Activated naive CD4-positive, alpha-beta T cell treated with anti-CD3 and anti-CD28 coated beads, Interleukin-2, amount 10 ng/mL, durations not matched to agents 7 days and 5 days (primary cell): ENCODE measurements at regions of chr7 and their contacts with region 1.

Region 1: GRCh38 chr7:149125863-149126661 is at the start of gene ZNF425:
- DNase-seq: peak; percentile 94
- H3K4me3 Mint-ChIP-seq: peak within 1 kb of the TSS; percentile 99
- H3K27ac Mint-ChIP-seq: peak within 1 kb of the TSS; percentile 99
- H3K4me1 Mint-ChIP-seq: peaks cover 28% of the 10 kb centered on the region
- H3K27me3 Mint-ChIP-seq: peaks cover 9% of the 10 kb centered on the region

Region 2: DNA sequence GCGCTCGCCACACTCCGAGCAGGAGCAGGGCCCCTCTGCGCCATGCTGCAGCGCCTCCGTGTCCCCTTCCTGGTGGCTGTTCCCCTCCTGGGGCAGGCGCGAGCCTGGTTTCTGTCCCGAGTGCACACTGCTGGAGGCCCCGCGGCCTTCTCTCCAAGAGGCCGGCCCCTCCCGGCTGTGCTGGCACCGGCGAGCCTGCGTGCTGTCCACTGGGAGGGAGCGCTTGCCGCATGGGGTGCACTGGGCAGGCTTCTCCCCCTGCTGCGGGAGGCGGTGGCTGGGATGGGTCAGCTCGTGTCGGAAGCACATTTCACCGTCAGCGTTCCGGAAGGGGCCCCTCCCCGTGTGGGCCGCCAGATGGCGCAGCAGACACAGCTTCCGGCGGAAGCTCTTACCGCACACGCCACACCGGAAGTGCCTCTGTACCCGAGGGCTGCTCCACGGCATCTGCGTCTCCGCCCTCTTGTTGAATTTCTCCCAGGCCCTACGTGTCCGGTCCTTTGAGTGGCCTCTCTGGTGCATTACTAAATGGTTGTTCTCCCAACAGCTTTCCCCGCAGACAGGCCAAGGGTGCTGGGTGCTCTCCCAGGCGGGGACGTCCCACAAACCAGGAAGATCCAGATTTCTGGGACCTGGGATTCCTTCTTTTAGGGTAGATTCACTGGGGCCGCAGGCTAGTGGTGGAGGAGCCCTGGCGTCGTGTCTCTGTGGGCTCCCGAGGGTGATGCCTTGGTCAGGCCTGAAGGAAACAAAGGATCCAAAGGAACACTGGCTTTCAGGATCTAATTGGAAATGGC is 54.2 kb before region 1 on chr7:
- CTCF ChIA-PET with region 1: interaction called, 10 read pairs
- DNase-seq: peak; percentile 32
- H3K4me3 Mint-ChIP-seq: no peak overlapping the region
- H3K27ac Mint-ChIP-seq: no peak overlapping the region
- H3K4me1 Mint-ChIP-seq: peaks cover 11% of the 10 kb centered on the region
- H3K27me3 Mint-ChIP-seq: no peaks in the 10 kb centered on the region

Region 3: GRCh38 chr7:149147072-149147751 is 21.1 kb after region 1 on chr7 and contains the start of gene ZNF398:
- CTCF ChIA-PET with region 1: interaction called, 29 read pairs
- DNase-seq: peak; percentile 81
- H3K4me3 Mint-ChIP-seq: peak within 1 kb of the TSS; percentile 82
- H3K27ac Mint-ChIP-seq: peak within 1 kb of the TSS; percentile 89
- H3K4me1 Mint-ChIP-seq: peaks cover 35% of the 10 kb centered on the region
- H3K27me3 Mint-ChIP-seq: no peaks in the 10 kb centered on the region